ENCODE measurements at regions of chr3 and their contacts with region 1.

Region 1: GRCh38 chr3:184174646-184175492 is at the start of gene AP2M1:
- DNase-seq: peak; percentile 98 to 99
- ATAC-seq: peak; percentile 90 to 93 (median 92)
- H3K4me3 ChIP-seq: peak within 1 kb of the TSS; percentile 100
- H3K27ac ChIP-seq: peak within 1 kb of the TSS; percentile 96
- H3K4me1 ChIP-seq: peaks cover 36% of the 10 kb centered on the region
- H3K27me3 ChIP-seq: no peaks in the 10 kb centered on the region
- CTCF ChIP-seq: no peak
- total RNA-seq, gene AP2M1: 157 to 178 (median 165) TPM

Region 2: DNA sequence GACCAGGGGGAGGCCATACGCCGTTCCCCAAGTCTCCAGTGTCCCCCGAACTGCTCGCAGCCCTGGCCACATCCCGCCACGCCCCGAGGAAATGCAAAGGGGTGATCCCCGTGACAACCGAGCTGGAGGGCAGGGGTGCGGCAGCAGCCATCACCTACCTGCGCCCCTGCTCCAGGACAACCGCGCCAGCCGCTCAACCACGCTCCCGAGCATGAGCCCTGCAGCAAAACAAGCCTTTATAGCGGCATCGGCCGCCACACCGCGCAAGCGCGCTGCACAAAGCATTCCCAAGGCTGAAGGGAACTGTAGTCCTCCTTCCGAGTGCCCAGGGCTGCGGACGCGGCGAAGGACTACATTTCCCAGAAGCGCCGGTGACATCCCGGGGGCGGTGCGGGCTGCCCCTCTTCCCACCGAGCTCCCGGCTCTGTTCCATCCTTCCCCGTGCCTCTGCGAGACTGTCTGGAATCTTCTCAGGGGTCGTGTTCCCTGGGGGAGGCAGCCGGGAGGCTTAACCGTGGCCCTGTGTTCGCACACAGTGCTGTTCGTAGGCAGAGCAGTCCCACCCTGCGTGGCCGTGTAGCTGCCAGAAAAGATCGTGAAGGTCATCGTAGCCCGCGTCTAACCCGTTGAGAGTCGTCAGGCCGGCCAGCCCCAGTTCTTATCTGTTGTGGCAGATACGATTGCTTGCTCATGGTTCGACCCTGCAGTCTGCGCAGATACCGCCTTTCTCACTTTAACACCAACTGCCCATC is 157.0 kb before region 1 on chr3 and contains the start of gene ABCC5:
- intact Hi-C with region 1: loop called in 1 of 2 experiments (anchors 10 kb)
- DNase-seq: peak; percentile 94 to 97
- ATAC-seq: peak; percentile 91 to 94 (median 94)
- H3K4me3 ChIP-seq: peak within 1 kb of the TSS; percentile 96
- H3K27ac ChIP-seq: peak within 1 kb of the TSS; percentile 89
- H3K4me1 ChIP-seq: peaks cover 25% of the 10 kb centered on the region
- H3K27me3 ChIP-seq: no peaks in the 10 kb centered on the region
- CTCF ChIP-seq: no peak
- total RNA-seq, gene ABCC5: 34.4 to 94.2 (median 55.6) TPM

Region 3: GRCh38 chr3:184117636-184118035 is 57.2 kb before region 1 on chr3:
- intact Hi-C with region 1: no loop called
- DNase-seq: no peak
- ATAC-seq: no peak
- H3K4me3 ChIP-seq: no peak overlapping the region
- H3K27ac ChIP-seq: no peak overlapping the region
- H3K4me1 ChIP-seq: no peaks in the 10 kb centered on the region
- H3K27me3 ChIP-seq: no peaks in the 10 kb centered on the region
- CTCF ChIP-seq: no peak

Region 4: DNA sequence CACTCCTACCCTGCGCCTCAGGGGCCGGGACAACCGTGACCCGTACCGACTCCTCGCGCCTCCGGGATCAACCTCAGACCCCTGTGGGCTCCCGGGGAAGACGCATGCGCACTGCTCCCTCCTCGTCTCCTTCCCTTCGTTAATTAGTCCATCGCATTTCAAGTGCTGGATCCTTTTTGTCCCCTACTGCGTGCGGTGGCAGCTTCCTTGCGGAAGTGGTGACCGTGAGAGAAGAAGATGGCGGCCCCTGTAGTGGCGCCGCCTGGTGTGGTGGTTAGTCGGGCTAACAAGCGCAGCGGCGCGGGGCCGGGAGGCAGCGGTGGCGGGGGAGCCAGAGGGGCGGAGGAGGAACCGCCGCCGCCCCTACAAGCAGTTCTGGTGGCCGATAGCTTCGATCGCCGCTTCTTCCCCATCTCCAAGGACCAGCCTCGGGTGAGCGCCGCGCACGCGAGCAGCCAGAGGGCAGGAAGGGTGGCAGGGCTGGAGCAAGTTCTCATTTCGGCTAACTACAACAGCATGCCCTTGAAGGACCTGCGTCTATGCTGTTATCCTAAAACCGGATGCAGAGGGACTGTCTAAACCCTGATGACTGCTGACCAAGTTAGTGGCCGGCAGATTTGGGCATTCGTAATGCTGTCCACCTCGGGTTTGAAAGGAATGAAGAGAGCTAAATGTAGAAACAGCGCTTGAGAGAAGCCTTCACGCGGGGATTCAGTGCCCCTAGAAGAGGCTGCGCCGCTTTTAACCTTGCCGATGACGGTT is 39.5 kb before region 1 on chr3 and contains the start of gene EIF2B5:
- intact Hi-C with region 1: loop called (anchors 5 kb)
- DNase-seq: peak; percentile 92 to 95
- ATAC-seq: peak; percentile 93 to 95 (median 94)
- H3K4me3 ChIP-seq: peak within 1 kb of the TSS; percentile 96
- H3K27ac ChIP-seq: peak within 1 kb of the TSS; percentile 93
- H3K4me1 ChIP-seq: peaks cover 11% of the 10 kb centered on the region
- H3K27me3 ChIP-seq: no peaks in the 10 kb centered on the region
- CTCF ChIP-seq: peak; percentile 35
- total RNA-seq, gene EIF2B5: 44.0 to 55.1 (median 50.0) TPM

Region 5: GRCh38 chr3:184154885-184155643 is 19.8 kb before region 1 on chr3 and contains the start of gene DVL3:
- intact Hi-C with region 1: loop called in 1 of 2 experiments (anchors 2 kb)
- DNase-seq: peak; percentile 80 to 90
- ATAC-seq: peak; percentile 84 to 91 (median 88)
- H3K4me3 ChIP-seq: peak within 1 kb of the TSS; percentile 84
- H3K27ac ChIP-seq: peak within 1 kb of the TSS; percentile 88
- H3K4me1 ChIP-seq: peaks cover 38% of the 10 kb centered on the region
- H3K27me3 ChIP-seq: no peaks in the 10 kb centered on the region
- CTCF ChIP-seq: no peak
- total RNA-seq, gene DVL3: 46.7 to 57.2 (median 47.7) TPM

Region 6: GRCh38 chr3:184185461-184186308 is 10.8 kb after region 1 on chr3 and contains the start of gene ABCF3:
- intact Hi-C with region 1: loop called in 1 of 2 experiments (anchors 1 kb)
- DNase-seq: peak; percentile 99 to 100
- ATAC-seq: peak; percentile 96 to 98 (median 96)
- H3K4me3 ChIP-seq: peak within 1 kb of the TSS; percentile 93
- H3K27ac ChIP-seq: peak within 1 kb of the TSS; percentile 92
- H3K4me1 ChIP-seq: peaks cover 26% of the 10 kb centered on the region
- H3K27me3 ChIP-seq: no peaks in the 10 kb centered on the region
- CTCF ChIP-seq: no peak
- total RNA-seq, gene ABCF3: 44.1 to 93.0 (median 72.7) TPM

Region 7: DNA sequence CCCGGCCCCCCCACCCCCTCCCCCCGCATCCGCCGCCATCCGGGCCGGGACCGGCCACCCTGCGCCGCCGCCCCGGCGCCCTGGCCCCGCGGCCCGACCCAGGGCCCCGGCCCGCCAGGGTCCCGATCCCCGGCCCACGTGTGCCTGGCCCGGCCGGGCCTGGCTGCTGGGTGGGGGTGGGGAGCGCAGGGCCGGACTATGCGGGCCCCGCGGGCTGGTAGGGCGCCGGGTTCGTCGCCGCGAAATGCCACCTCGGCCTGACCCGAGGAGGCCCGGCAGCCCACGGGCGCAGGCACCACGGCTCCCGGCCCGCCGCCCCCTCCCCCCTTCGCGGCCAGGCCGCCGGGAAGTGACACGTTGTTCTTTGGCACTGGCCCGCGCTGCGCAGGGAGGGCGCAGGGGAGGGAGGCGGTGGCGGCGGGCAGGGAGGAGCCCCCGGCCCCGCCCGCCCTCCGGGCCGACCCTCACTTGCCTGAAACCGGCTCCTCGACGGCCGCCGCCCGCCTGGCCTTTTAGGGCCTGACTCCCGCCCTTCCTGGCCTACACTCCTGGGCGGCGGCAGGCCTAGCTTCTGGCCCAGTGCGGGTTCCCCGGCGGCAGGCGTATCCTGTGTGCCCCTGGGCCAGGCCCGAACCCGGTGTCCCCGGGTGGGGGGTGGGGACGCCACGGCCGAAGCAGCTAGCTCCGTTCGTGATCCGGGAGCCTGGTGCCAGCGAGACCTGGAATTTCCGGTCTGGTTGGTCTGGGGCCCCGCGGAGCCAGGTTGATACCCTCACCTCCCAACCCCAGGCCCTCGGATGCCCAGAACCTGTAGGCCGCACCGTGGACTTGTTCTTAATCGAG is 140.1 kb after region 1 on chr3:
- intact Hi-C with region 1: loop called in 1 of 2 experiments (anchors 5 kb)
- DNase-seq: peak; percentile 92 to 96
- ATAC-seq: peak; percentile 78 to 81 (median 80)
- H3K4me3 ChIP-seq: peak overlapping the region; percentile 80
- H3K27ac ChIP-seq: peak overlapping the region; percentile 96
- H3K4me1 ChIP-seq: peaks cover 40% of the 10 kb centered on the region
- H3K27me3 ChIP-seq: no peaks in the 10 kb centered on the region
- CTCF ChIP-seq: no peak

Measured in psoas muscle (tissue), 8 donors.